Activated CD8-positive, alpha-beta T cell treated with anti-CD3 and anti-CD28 coated beads for 36 hours (primary cell): ENCODE measurements at regions of chr12 and their contacts with region 1.

Region 1: DNA sequence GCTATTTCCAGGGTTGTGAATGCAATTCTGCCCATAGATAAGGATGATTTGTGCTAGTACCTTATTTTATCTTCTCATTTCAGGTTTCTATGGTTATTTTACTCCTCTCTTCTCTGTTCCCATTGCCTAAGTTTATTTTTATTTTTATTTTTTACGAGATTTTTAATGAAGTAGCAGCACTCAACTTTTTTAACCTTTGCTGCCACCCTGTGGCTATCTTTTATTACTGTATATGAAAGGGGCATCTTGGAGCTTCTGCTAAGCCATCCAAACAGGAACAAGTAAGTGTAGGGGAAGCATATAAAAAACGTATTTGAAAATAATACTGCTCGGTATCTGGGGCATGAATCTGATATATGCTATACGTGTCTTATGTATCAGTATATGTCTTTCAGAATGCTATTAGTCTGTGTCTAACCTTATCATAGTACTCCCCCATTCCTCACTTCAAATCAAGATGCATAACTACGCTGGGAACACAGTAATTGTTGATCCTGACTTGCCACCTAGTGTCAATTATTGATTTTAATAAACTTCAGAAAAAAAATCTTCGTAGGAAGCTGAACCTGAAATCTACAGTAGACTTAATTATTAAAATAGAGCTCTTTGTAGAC is 60.3 kb downstream of the KLRG1 start:
- DNase-seq: peak; percentile 27
- ATAC-seq: peak; percentile 75
- H3K4me3 Mint-ChIP-seq: no peak overlapping the region
- H3K27ac Mint-ChIP-seq: no peak overlapping the region
- H3K4me1 Mint-ChIP-seq: peaks cover 13% of the 10 kb centered on the region
- H3K27me3 Mint-ChIP-seq: no peaks in the 10 kb centered on the region
- CTCF ChIP-seq: peak; percentile 80

Region 2: DNA sequence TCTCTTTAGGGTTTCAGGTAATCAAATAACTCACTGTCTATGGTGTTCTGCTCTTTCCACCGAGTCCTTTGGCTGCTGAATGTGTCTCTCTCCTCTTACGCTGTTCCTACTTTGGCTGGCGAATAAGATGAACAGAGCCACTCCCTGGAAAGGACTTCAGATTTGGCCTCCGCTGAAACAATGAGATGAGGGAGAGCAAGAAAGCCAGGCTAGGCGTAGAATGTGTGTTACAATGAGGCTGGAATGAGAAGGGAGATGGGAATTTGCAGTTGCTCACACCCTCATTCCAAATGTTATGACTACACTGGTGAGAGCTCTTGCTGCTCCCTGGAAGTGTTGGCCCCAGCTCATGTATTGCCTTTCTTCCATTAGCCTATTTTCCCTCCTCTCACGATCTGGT is 387.0 kb before region 1 on chr12 and contains the start of gene MFAP5:
- CTCF ChIA-PET with region 1: interaction called, 25 read pairs
- POLR2A ChIA-PET with region 1: no interaction called
- intact Hi-C with region 1: loop called (anchors 10 kb)
- DNase-seq: no peak
- ATAC-seq: no peak
- H3K4me3 Mint-ChIP-seq: no peak within 1 kb of the TSS
- H3K27ac Mint-ChIP-seq: no peak within 1 kb of the TSS
- H3K4me1 Mint-ChIP-seq: no peaks in the 10 kb centered on the region
- H3K27me3 Mint-ChIP-seq: peaks cover 4% of the 10 kb centered on the region
- CTCF ChIP-seq: no peak
- total RNA-seq, gene MFAP5: not detected

Region 3: GRCh38 chr12:8860165-8860961 is 189.3 kb before region 1 on chr12:
- CTCF ChIA-PET with region 1: interaction called, 13 read pairs
- POLR2A ChIA-PET with region 1: no interaction called
- intact Hi-C with region 1: no loop called
- DNase-seq: peak; percentile 50
- ATAC-seq: peak; percentile 58
- H3K4me3 Mint-ChIP-seq: no peak overlapping the region
- H3K27ac Mint-ChIP-seq: no peak overlapping the region
- H3K4me1 Mint-ChIP-seq: no peaks in the 10 kb centered on the region
- H3K27me3 Mint-ChIP-seq: no peaks in the 10 kb centered on the region
- CTCF ChIP-seq: peak; percentile 69

Region 4: DNA sequence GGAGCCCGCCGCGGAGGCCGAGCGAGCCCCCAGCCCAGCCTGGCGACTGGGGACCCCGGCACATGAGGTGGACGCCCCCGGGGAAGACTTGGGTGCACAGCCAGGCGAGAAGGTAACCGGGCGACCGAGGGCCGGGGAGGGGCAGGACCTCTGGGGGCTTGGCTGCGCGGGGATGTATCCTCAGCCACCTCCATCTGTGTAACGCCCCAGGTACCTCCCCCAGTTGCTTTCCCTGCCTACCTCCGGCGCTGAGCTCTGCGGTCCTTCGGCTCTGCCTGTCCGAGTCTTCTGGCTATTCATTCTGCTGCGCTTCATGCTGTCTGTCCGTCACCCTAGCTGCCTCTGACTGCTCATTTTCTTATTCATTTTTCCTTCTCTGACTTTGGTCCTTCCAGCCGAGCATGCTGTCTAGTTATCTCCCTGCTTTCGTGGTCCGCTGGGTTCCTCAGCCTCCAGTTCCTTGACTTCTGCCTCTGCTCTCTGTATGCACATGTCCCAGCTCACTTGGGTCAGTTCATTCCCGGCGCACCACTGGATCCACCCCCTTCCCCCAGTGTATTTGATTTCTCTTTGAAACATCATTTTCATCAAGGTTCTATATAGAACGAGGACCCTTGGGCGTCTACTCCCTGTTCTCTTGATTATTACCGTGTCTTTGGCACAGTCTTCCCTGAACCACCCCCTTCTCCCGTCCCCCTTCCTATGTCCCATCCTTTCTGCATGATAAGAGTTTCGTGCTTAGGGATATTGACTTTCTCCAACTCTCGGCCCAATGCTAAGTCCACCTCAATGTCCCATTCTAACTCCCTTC is 134.7 kb before region 1 on chr12:
- CTCF ChIA-PET with region 1: interaction called, 64 read pairs
- POLR2A ChIA-PET with region 1: interaction called, 3 read pairs
- intact Hi-C with region 1: no loop called
- DNase-seq: peak; percentile 68
- ATAC-seq: peak; percentile 85
- H3K4me3 Mint-ChIP-seq: no peak overlapping the region
- H3K27ac Mint-ChIP-seq: no peak overlapping the region
- H3K4me1 Mint-ChIP-seq: peaks cover 14% of the 10 kb centered on the region
- H3K27me3 Mint-ChIP-seq: no peaks in the 10 kb centered on the region
- CTCF ChIP-seq: no peak

Region 5: GRCh38 chr12:8941691-8942478 is 107.7 kb before region 1 on chr12:
- CTCF ChIA-PET with region 1: interaction called, 153 read pairs
- POLR2A ChIA-PET with region 1: no interaction called
- intact Hi-C with region 1: no loop called
- DNase-seq: no peak
- ATAC-seq: no peak
- H3K4me3 Mint-ChIP-seq: no peak overlapping the region
- H3K27ac Mint-ChIP-seq: peak overlapping the region; percentile 21
- H3K4me1 Mint-ChIP-seq: peaks cover 11% of the 10 kb centered on the region
- H3K27me3 Mint-ChIP-seq: no peaks in the 10 kb centered on the region
- CTCF ChIP-seq: no peak

Region 6: DNA sequence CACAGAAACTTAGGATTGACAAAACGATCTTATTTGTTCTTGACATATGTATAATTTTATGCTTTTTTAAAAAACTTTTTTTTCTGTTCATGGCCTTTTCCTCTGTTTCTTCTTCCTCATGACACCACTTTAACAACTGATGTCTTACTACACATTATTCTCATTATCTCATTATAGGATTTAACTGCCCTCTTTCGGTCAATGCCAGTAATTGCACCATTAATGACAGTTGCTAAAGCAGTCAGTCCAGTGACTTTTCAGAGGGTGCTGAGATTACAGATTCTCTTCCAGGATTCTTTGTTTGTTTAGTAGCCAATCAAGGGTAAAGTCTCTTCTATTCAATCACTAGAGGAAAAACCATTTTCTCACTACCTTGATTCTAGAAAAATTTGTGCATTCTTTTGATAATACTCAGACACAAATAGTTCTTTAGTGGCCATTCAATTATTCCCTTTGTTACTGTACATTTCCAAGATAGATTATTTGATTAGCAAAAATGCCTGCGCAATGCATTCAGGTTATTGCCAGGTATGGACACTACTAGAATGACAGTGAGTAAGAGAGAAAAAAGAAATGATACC is 10.1 kb before region 1 on chr12:
- CTCF ChIA-PET with region 1: interaction called, 49 read pairs
- POLR2A ChIA-PET with region 1: interaction called, 3 read pairs
- intact Hi-C with region 1: no loop called
- DNase-seq: no peak
- ATAC-seq: peak; percentile 87
- H3K4me3 Mint-ChIP-seq: no peak overlapping the region
- H3K27ac Mint-ChIP-seq: peak overlapping the region; percentile 53
- H3K4me1 Mint-ChIP-seq: peaks cover 52% of the 10 kb centered on the region
- H3K27me3 Mint-ChIP-seq: no peaks in the 10 kb centered on the region
- CTCF ChIP-seq: peak; percentile 89

Region 7: GRCh38 chr12:9156119-9156518 is 106.5 kb after region 1 on chr12:
- CTCF ChIA-PET with region 1: no interaction called
- POLR2A ChIA-PET with region 1: no interaction called
- intact Hi-C with region 1: no loop called
- DNase-seq: no peak
- ATAC-seq: no peak
- H3K4me3 Mint-ChIP-seq: no peak overlapping the region
- H3K27ac Mint-ChIP-seq: no peak overlapping the region
- H3K4me1 Mint-ChIP-seq: no peaks in the 10 kb centered on the region
- H3K27me3 Mint-ChIP-seq: no peaks in the 10 kb centered on the region
- CTCF ChIP-seq: no peak